AG04450 (cell line): ENCODE measurements at regions of chr14 and their contacts with region 1.

Region 1: GRCh38 chr14:67426983-67427606 is 15.1 kb upstream of the PLEK2 start:
- DNase-seq: peak; percentile 45
- H3K4me3 ChIP-seq: no peak overlapping the region
- H3K27ac ChIP-seq: no peak overlapping the region
- H3K27me3 ChIP-seq: peaks cover 10% of the 10 kb centered on the region
- CTCF ChIP-seq: peak; percentile 86

Region 2: GRCh38 chr14:67345583-67345982 is 81.5 kb before region 1 on chr14:
- CTCF ChIA-PET with region 1: no interaction called
- POLR2A ChIA-PET with region 1: no interaction called
- DNase-seq: no peak
- H3K4me3 ChIP-seq: no peak overlapping the region
- H3K27ac ChIP-seq: no peak overlapping the region
- H3K27me3 ChIP-seq: no peaks in the 10 kb centered on the region
- CTCF ChIP-seq: no peak

Region 3: DNA sequence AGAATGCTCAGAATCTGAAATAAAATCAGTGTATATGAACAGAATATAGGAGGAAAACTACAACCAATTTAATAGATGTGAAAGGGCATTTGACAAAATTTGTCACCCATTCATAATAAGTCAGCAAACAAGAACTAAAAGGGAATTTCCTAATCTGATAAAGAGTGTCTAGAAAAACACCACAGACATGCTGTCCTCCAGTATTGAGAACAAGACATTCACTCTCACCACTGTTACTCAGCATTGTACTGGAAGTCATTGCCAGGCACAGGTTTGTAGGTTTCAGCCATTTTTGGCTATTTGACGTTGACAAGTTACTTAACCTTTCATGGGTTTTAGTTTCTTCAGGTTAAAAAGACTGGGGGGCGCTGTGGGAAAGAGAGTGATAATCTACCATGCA is 53.7 kb before region 1 on chr14:
- CTCF ChIA-PET with region 1: no interaction called
- POLR2A ChIA-PET with region 1: no interaction called
- DNase-seq: no peak
- H3K4me3 ChIP-seq: no peak overlapping the region
- H3K27ac ChIP-seq: no peak overlapping the region
- H3K27me3 ChIP-seq: no peaks in the 10 kb centered on the region
- CTCF ChIP-seq: no peak

Region 4: DNA sequence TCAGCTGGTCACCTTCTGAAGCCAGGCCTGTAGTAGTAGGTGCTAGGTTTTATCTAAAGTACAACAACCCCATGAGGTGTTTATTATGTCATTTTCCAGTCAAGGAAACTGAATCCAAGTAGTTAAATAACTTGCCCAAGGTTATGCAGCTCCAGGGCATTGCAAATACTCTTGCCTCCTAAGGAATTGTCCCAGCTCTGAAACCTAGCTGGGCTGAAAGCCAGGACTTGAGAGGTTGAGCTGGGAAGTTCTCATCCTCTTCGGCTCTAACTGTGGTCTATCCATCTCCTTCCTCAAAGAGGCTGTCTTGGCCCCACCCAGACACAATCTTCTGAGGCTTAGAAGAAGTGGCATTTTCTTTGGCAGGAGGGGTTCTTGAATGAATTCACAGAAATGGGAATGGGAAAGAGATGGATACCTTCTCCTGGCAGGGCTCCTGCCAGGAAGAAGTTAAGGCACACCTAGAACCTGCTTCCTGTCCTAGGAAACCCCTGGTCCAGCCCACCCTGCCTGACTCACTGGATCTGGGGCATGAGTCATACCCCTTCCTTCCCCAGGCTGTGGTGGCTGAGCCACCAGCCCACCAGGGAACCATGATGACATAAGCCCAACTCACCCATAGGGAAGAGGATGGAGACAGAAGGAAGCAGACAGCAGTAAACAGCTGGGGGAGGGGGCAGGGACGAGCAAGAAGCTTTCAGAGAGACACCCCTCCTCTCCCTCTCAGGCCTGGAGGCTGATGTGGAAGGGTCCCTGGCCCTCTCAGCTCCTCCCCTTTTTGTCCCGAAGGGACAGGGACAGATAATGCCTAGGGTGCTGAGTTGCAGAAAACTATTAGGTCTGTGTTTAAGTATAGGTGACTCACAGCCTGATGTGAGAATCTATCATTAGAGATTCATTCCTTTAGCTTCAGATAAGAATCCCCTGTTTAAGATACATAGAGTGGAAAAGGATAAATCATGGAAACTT is 13.0 kb before region 1 on chr14:
- CTCF ChIA-PET with region 1: interaction called, 19 read pairs
- POLR2A ChIA-PET with region 1: no interaction called
- DNase-seq: peak; percentile 26
- H3K4me3 ChIP-seq: no peak overlapping the region
- H3K27ac ChIP-seq: no peak overlapping the region
- H3K27me3 ChIP-seq: no peaks in the 10 kb centered on the region
- CTCF ChIP-seq: no peak

Region 5: DNA sequence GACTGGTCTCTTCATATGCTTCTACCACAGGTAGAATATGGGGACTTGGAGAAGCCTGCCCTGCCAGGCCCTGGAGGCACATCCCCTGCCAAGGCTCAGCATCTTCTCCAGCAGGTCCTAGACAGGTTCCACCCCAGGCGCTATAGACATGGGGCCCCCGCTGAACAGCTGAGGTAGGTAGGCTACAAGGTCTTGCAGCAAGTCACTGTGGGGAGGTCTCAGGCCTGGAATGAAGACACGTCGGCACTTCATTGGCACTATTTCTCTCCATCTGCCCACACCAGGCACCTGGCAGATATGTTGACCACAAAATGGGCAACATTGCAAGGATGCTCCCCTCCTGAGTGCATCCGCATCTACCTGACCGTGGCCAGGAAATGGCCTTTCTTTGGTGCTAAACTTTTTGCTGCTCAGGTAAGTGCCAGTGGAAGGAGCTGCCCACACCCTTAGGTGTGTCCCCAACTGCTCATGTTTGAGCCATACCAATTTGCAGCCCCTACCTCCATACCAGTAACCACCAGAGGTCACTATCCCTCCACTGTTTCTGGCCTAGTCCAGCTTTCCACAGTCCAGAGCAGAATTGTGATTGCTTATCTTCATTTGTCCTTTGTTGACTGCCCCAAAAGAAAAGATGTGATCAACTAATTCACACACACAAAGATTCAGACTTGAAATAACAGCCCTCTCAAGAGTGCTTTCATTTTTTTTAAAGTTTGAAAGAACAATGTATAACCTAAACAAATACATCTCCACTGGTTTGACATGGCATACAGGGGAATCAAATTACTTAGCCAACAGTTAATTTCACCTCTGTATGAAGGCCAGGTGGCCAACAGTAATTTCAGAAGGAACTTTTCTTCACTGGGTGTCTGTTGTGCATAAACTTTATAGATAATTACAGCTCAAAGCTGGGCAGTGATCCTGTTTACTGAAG is 156.9 kb after region 1 on chr14:
- CTCF ChIA-PET with region 1: interaction called, 14 read pairs
- POLR2A ChIA-PET with region 1: no interaction called
- DNase-seq: no peak
- H3K4me3 ChIP-seq: no peak overlapping the region
- H3K27ac ChIP-seq: no peak overlapping the region
- H3K27me3 ChIP-seq: peaks cover 5% of the 10 kb centered on the region
- CTCF ChIP-seq: peak; percentile 85